ENCODE measurements at regions of chr7 and their contacts with region 1.

Region 1: DNA sequence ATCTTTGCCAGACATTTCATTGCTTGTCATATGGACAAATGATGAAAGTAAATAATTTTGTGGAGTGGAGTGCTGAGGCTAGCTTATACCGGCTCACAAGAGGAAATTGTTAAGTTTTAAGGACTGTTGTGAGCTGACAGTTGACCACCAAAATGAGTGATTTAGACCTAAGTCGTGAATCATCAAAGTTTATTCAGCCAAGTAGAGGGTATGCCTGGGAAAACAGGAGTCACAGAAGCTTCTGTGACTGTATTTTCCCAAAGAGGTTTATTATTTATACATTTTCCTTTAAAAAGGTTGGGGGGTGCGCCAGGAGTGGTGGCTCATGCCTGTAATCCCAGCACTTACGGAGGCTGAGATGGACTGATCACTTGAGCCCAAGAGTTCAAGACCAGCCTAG is 21.8 kb downstream of the MRPS24 start:
- DNase-seq: no peak

Region 2: DNA sequence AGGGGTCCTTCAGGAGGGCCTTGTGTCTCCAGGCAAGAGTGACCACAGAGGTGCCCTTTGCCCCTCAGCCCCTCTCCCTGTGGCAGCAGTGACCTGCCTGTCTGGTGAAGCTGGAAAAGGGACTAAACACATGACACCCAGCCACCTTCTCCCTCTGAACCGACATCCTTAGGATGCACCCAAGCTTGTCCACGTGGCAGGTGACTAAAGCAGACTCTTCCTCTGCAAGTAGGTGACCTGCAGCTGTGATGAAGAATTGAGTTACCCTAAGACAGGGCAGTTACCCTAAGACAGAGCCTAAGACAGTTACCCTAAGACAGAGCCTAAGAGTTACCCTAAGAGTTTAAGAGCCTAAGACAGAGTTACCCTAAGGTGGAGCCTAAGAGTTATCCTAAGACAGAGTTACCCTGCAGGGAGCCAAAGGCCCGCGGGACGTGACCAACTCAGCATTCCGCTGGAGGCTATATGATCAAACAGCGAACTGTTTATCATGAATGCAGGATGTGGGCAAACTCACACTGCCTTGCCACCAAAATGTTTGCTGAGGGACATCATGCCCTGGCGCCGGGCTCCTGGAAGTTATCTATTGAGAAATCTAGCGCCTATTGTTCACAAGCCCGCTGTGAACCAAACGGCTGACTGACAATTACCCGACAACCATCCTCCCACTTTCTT is 39.2 kb before region 1 on chr7:
- in situ Hi-C with region 1: loop called (anchors 5 kb)
- DNase-seq: no peak

Region 3: GRCh38 chr7:43942997-43943704 is 95.7 kb after region 1 on chr7:
- in situ Hi-C with region 1: loop called (anchors 5 kb)
- DNase-seq: no peak

Region 4: DNA sequence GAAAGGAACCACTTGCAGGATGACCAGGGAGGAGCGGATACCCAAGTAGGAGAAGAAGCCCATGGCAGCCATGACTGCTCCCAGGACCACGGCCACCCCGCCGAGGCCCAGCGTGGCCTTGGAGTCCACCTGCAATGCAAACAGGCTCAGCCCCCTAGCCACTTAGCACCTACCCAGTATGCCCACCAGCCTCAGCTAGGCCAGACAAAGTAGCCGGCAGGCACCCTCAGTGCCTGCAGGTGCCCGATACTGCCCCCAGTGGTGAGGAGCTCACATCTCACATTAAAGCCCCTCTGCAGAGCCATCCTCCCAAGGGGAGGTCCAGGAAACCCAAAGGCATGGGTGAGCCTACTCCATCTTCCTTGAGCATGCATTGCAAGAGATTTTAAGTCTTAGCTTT is 687.0 kb after region 1 on chr7:
- in situ Hi-C with region 1: no loop called
- DNase-seq: peak; percentile 15

Measured in G401 (cell line).